OCI-LY7 (cell line): ENCODE measurements at regions of chr12 and their contacts with region 1.

Region 1: DNA sequence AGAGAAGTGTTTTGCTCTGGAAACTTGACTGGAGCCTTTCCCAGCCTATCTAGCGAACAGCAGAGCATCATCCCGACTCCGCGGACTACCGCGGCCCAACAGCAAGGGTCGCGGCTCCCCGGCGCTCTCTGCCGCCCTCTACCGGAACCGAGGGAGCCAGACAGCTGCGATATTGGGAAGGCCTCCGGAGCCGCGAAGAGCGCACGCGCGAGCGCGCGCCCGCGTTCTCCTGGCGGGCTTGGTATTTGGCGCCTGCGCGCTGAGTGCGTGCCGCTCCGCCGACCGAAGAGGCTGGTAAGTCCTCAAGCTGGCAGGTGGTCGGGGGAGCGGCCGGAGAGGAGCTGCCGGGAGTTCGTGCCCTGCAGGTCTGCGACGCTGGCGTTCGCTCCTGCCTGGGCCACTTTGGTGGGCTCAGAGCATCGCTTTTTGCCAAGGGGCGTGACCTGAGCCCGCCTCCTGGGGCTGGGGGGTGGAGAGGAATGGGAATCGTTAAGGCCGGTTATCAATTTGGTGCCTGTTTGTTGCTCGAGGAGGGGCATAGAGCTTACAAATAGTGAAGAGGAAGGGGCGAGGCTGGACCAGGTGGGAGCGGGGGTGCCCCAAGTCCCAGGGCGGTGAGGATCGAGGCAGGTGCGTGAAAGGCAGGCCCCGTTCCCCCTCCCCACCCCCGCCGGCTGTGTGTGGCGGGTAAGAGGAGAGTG is at the start of gene TMEM106C:
- DNase-seq: peak; percentile 96
- H3K4me3 ChIP-seq: peak within 1 kb of the TSS; percentile 70
- H3K27ac ChIP-seq: peak within 1 kb of the TSS; percentile 29
- H3K4me1 ChIP-seq: peaks cover 32% of the 10 kb centered on the region
- CTCF ChIP-seq: peak; percentile 96
- total RNA-seq, gene TMEM106C: 158 and 182 TPM in 2 replicates

Region 2: GRCh38 chr12:47705566-47706425 is 257.7 kb before region 1 on chr12 and contains the start of gene RPAP3:
- CTCF ChIA-PET with region 1: no interaction called
- POLR2A ChIA-PET with region 1: no interaction called
- intact Hi-C with region 1: loop called (anchors 5 kb)
- DNase-seq: peak; percentile 97
- H3K4me3 ChIP-seq: peak within 1 kb of the TSS; percentile 86
- H3K27ac ChIP-seq: peak within 1 kb of the TSS; percentile 83
- H3K4me1 ChIP-seq: peaks cover 54% of the 10 kb centered on the region
- CTCF ChIP-seq: peak; percentile 74
- total RNA-seq, gene RPAP3: 21.6 and 25.1 TPM in 2 replicates

Region 3: DNA sequence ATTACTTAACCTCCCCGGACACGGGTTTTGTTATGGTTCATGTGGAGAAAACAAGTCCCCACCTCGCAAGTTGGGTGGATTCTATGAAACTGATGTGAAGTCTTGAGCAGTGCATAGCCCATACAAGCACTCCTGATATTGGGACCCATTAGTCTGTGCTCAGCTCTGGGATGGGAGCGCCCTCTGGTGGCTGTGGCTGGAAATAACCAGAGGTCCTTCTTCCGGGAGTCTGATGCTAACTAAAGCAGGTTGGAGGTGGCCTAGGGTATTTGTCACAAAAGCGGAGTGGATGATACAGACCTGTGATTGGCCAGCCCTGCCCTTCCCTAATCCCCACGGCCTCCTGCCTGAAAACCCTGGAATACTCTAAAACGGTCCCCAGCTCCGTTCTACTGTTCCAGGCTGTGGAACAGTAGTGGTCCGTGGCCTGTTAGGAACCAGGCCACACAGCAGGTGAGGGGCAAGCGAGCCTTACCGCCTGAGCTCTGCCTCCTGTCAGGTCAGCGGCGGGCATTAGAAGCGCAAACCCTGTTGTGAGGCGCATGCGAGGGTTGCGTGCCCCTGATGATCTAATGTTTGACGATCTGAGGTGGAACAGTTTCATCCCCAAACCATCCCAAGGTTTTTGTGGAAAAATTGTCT is 184.1 kb before region 1 on chr12:
- CTCF ChIA-PET with region 1: no interaction called
- POLR2A ChIA-PET with region 1: no interaction called
- intact Hi-C with region 1: loop called (anchors 10 kb)
- DNase-seq: peak; percentile 89
- H3K4me3 ChIP-seq: no peak overlapping the region
- H3K27ac ChIP-seq: no peak overlapping the region
- H3K4me1 ChIP-seq: peaks cover 42% of the 10 kb centered on the region
- CTCF ChIP-seq: peak; percentile 97

Region 4: DNA sequence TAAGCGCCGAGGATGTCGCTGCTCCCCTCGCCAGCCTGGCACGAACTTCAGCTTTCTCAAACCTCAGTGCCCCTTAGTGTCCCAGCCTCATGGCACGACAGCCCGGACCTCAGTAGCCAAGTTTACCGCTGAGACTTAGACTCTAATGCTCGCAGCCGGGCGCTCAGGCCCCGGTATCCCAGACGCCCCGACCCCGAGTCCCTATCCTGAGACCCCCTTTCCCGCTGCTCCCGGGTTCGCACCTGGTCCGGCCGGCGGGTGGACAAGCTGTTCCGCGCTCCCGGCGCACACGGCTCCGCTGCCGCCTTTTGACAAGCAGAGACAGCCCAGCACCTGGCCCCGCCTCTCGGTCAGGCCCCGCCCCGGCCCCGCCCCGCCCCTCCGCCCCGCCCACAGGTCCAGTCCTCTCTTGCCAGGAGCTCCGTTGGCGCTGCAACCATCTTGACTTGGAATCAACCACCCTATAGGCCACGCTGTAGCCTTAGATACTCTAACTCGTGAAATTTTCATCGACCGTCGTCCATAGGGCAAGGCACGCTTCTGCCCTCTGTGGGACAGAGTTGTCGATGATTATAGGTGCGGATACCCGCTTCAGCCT is 58.7 kb before region 1 on chr12 and contains the start of gene VDR:
- CTCF ChIA-PET with region 1: no interaction called
- POLR2A ChIA-PET with region 1: no interaction called
- intact Hi-C with region 1: loop called (anchors 5 kb)
- DNase-seq: peak; percentile 69
- H3K4me3 ChIP-seq: peak within 1 kb of the TSS; percentile 71
- H3K27ac ChIP-seq: no peak within 1 kb of the TSS
- H3K4me1 ChIP-seq: peaks cover 15% of the 10 kb centered on the region
- CTCF ChIP-seq: peak; percentile 58
- total RNA-seq, gene VDR: 4.8 and 5.4 TPM in 2 replicates

Region 5: DNA sequence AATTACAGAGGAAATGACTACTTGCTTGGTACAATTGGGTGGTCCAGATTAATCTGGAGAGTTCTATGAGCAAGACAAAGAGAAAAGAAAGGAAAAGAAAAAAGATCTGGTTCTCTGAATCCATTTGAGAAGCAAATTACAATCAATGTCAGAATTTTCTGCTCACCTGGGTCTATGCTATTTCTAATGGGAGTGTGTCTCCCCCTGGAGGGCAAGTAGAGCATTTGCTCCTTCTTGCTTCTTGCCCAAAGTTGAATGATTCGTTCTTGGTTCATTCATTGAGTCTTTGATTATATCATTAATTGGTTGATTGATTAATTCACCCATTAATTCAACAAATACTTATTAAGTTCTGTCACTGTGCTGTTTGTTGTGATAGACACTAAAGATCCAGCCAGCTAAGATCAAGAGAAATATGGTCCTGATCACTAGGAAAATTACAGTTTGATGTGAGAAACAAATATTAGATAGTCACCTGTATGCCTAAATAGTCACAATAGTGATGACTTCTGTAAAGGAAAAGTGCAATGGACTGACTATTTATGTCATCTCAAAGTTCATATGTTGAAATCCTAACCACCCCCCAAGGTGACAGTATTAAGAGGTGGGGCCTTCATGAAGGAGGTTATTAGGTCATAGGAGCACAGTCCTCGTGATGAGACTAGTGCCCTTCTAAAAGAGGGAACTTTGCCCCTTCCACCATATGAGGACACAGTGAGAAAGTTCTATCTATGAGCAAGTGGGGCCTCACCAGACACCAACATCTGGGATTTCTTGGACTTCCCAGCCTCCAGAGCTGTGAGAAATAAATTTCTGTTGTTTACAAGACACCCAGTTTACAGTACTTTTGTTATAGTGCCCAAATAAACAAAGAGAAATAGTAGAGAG is 201.8 kb after region 1 on chr12:
- CTCF ChIA-PET with region 1: no interaction called
- POLR2A ChIA-PET with region 1: no interaction called
- intact Hi-C with region 1: loop called (anchors 1 kb)
- DNase-seq: peak; percentile 76
- H3K4me3 ChIP-seq: no peak overlapping the region
- H3K27ac ChIP-seq: no peak overlapping the region
- H3K4me1 ChIP-seq: no peaks in the 10 kb centered on the region
- CTCF ChIP-seq: peak; percentile 98

Region 6: GRCh38 chr12:48189331-48190125 is 226.0 kb after region 1 on chr12:
- CTCF ChIA-PET with region 1: interaction called, 3 read pairs
- POLR2A ChIA-PET with region 1: interaction called, 3 read pairs
- intact Hi-C with region 1: loop called (anchors 2 kb)
- DNase-seq: peak; percentile 68
- H3K4me3 ChIP-seq: no peak overlapping the region
- H3K27ac ChIP-seq: no peak overlapping the region
- H3K4me1 ChIP-seq: no peaks in the 10 kb centered on the region
- CTCF ChIP-seq: peak; percentile 89